CD8-positive, alpha-beta memory T cell (primary cell): ENCODE measurements at regions of chr10 and their contacts with region 1.

Region 1: DNA sequence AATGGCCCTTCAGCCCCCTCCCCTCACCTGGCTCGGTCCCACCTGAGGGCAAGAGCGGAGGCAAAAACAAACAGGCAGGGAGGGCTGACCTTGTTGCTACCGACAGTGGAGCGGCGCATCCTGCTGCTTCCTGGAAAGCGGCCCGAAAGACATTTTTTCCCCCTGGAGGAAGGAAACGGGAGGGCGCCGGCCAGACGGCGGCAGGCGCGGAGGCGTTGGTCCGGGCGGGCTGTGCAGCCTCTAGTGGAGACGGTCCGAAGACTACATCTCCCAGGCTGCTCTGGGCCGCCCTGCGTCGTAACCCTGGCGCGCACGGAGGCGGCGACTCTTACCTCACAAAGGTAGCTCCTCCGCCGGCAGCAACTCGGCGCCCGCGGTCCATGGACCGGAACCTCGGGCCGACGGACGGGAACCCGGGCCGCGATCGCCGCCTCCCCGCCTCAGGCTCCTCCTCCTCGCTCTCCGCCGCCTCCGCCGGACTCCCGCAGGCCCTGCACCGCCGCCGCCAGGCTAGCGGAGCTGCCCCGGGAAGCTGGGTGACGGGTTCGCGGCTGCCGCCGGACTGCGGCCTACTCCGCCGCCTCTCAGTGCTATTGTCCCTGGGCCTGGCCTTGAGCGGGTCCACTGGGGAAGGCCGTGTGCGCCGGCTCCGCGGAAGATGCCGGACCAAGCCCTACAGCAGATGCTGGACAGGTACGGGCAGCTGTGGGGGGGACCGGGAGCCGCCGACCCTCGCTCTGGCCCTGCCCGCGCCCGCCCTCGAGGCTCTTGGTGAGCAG is at the starts of genes CPEB3 and MARCHF5:
- DNase-seq: peak; percentile 86 to 94 (median 89)
- H3K4me3 ChIP-seq: peak within 1 kb of the TSS; percentile 95
- H3K4me3 Mint-ChIP-seq: peak within 1 kb of the TSS; percentile 92 to 99 (median 96)
- H3K27ac ChIP-seq: peak within 1 kb of the TSS; percentile 83
- H3K27ac Mint-ChIP-seq: peak within 1 kb of the TSS; percentile 84 to 98 (median 93)
- H3K4me1 ChIP-seq: peaks cover 22% of the 10 kb centered on the region
- H3K4me1 Mint-ChIP-seq: peaks cover 29 to 39% (median 33%) of the 10 kb centered on the region in 3 donors
- H3K27me3 ChIP-seq: no peaks in the 10 kb centered on the region
- H3K27me3 Mint-ChIP-seq: peaks cover 0 to 2% of the 10 kb centered on the region in 2 donors
- total RNA-seq, gene CPEB3: 2.1 TPM
- total RNA-seq, gene MARCHF5: 30.6 to 33.0 TPM

Region 2: GRCh38 chr10:91843083-91843482 is 447.9 kb before region 1 on chr10:
- CTCF ChIA-PET with region 1: no interaction called
- POLR2A ChIA-PET with region 1: no interaction called
- DNase-seq: no peak
- H3K4me3 ChIP-seq: no peak overlapping the region
- H3K4me3 Mint-ChIP-seq: no peak overlapping the region
- H3K27ac ChIP-seq: no peak overlapping the region
- H3K27ac Mint-ChIP-seq: peak overlapping the region in 1 of 8 donors; percentile 71
- H3K4me1 ChIP-seq: no peaks in the 10 kb centered on the region
- H3K4me1 Mint-ChIP-seq: no peaks in the 10 kb centered on the region
- H3K27me3 ChIP-seq: no peaks in the 10 kb centered on the region
- H3K27me3 Mint-ChIP-seq: no peaks in the 10 kb centered on the region

Region 3: DNA sequence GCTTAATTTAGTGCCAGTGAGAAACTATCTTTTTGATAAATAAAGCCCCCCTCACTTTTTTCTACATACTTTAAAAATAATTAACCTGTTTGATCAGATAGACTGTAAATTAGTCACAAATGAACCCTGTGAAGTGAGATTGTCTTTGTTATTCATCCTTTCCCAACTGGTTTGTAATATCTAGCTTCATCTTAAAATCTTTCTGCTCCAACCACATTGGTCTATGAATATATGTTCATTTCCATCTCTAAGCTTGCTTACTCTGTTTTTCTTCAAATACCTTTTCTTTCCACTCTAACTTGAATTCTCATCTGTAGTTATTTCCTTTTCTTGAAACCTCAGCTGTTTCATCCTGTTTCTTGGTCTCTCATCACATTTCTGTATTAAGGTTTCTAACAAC is 12.1 kb after region 1 on chr10:
- CTCF ChIA-PET with region 1: interaction called, 10 read pairs
- POLR2A ChIA-PET with region 1: interaction called, 3 read pairs
- DNase-seq: no peak
- H3K4me3 ChIP-seq: no peak overlapping the region
- H3K4me3 Mint-ChIP-seq: no peak overlapping the region
- H3K27ac ChIP-seq: no peak overlapping the region
- H3K27ac Mint-ChIP-seq: peak overlapping the region in 5 of 8 donors; percentile 0 to 18 (median 3)
- H3K4me1 ChIP-seq: peaks cover 10% of the 10 kb centered on the region
- H3K4me1 Mint-ChIP-seq: peaks cover 42 to 80% (median 67%) of the 10 kb centered on the region in 3 donors
- H3K27me3 ChIP-seq: no peaks in the 10 kb centered on the region
- H3K27me3 Mint-ChIP-seq: no peaks in the 10 kb centered on the region